Activated CD8-positive, alpha-beta T cell treated with anti-CD3 and anti-CD28 coated beads for 36 hours (primary cell): ENCODE measurements at regions of chr17 and their contacts with region 1.

Region 1: DNA sequence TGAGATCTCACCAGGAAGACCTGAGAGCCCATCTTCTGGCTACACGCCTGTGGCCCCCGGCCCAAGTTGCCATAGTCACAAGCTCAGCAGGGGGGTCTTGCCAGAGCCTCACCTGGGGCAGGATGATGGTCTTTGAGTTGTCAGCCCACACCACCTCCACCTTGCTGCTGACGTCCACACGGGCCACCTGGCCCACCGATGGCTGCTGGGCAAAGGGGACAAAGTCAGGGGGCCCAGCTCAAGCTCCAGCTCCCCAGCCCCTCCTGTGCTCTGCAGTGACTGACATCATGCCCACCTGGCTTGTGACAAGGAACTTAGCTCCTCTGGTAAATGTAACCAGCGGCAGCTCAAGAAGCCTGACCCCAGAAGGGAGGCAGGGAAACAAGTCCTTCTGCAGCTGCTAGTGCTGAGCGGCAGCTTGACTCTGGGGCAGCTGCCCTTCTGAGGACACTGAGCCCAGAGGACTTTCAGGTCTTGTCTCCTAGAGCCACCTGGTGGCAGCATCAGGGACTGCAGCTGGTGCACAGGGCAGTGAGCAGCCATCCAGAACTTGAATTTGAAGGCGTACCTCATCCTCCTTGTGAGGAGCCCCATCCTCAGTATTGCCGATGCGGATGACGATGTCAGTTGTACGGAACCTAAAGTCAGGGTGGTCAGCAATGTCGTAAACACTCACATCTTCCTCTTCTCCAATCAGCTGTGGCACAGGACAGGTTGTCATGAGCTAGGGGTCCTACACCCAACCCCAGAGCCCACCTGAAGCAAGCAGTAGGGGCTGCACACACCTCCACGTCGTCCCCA is 13.5 kb downstream of the SPHK1 start:
- DNase-seq: peak; percentile 93
- ATAC-seq: peak; percentile 97
- H3K4me3 Mint-ChIP-seq: no peak overlapping the region
- H3K27ac Mint-ChIP-seq: no peak overlapping the region
- H3K4me1 Mint-ChIP-seq: no peaks in the 10 kb centered on the region
- H3K27me3 Mint-ChIP-seq: no peaks in the 10 kb centered on the region
- CTCF ChIP-seq: peak; percentile 96

Region 2: DNA sequence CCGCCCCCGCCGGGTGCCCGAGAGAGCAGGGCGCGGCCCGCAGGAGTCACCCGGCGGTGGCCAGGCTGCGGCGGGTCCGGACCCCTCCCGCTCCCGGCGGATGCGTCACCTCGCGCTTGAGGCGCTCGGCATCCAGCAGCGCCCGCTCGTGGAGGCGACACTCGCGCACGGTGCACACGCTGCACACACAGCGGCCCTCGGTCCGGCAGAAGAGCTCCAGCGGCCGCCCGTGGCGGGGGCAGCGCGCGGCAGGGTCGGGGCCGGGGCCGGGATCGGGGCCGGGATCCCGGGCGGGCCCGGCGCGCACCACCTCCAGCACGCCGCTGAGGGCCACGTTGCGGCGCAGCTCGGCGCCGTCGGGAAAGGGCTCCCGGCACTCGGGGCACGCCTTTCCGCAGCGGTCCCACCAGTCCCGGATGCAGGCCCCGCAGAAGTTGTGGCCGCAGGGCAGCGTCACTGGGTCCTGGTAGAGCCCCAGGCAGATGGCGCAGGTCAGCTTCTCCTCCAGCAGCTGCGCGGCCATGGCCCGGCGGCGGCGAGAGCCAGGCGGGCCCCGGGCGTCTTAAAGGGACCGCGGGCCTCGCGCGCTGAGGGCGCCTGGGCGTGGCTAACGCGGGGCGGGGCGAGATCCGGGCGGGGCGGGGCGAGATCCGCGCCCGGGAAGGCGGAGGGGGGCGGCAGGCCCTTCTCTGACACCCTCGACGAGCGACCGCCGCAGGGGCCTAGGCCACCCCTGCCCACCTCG is 501.3 kb before region 1 on chr17 and contains the start of gene TRIM65:
- CTCF ChIA-PET with region 1: no interaction called
- POLR2A ChIA-PET with region 1: no interaction called
- intact Hi-C with region 1: no loop called
- DNase-seq: peak; percentile 85
- ATAC-seq: peak; percentile 88
- H3K4me3 Mint-ChIP-seq: peak within 1 kb of the TSS; percentile 87
- H3K27ac Mint-ChIP-seq: peak within 1 kb of the TSS; percentile 88
- H3K4me1 Mint-ChIP-seq: peaks cover 21% of the 10 kb centered on the region
- H3K27me3 Mint-ChIP-seq: no peaks in the 10 kb centered on the region
- CTCF ChIP-seq: peak; percentile 17
- total RNA-seq, gene TRIM65: 37.1 to 42.2 TPM

Region 3: GRCh38 chr17:76121932-76122430 is 275.9 kb before region 1 on chr17:
- CTCF ChIA-PET with region 1: interaction called, 14 read pairs
- POLR2A ChIA-PET with region 1: no interaction called
- intact Hi-C with region 1: no loop called
- DNase-seq: peak; percentile 40
- ATAC-seq: peak; percentile 10
- H3K4me3 Mint-ChIP-seq: peak overlapping the region; percentile 45
- H3K27ac Mint-ChIP-seq: peak overlapping the region; percentile 77
- H3K4me1 Mint-ChIP-seq: peaks cover 20% of the 10 kb centered on the region
- H3K27me3 Mint-ChIP-seq: no peaks in the 10 kb centered on the region
- CTCF ChIP-seq: no peak

Region 4: DNA sequence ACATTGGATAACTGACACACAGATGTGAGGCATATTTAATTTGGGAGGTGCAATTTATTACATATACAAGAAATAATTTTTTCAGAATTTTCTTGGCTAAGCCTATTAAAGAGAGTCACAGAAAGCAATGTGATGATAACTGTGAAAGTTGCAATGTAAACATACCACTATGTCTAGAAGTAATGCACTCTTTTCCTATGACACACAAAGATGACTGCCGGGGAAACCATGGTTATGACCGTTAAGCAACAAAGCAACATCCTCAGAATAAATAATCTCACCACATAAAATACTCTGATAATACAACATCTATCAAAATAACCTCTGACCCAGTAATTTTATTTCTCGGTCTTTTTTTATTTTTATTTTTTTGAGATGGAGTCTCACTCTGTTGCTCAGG is 79.3 kb before region 1 on chr17:
- CTCF ChIA-PET with region 1: interaction called, 11 read pairs
- POLR2A ChIA-PET with region 1: no interaction called
- intact Hi-C with region 1: no loop called
- DNase-seq: no peak
- ATAC-seq: no peak
- H3K4me3 Mint-ChIP-seq: no peak overlapping the region
- H3K27ac Mint-ChIP-seq: no peak overlapping the region
- H3K4me1 Mint-ChIP-seq: peaks cover 2% of the 10 kb centered on the region
- H3K27me3 Mint-ChIP-seq: no peaks in the 10 kb centered on the region
- CTCF ChIP-seq: no peak

Region 5: GRCh38 chr17:76353599-76354316 is 44.1 kb before region 1 on chr17 and contains the start of gene PRPSAP1:
- CTCF ChIA-PET with region 1: interaction called, 22 read pairs
- POLR2A ChIA-PET with region 1: no interaction called
- intact Hi-C with region 1: no loop called
- DNase-seq: peak; percentile 88
- ATAC-seq: peak; percentile 96
- H3K4me3 Mint-ChIP-seq: peak within 1 kb of the TSS; percentile 83
- H3K27ac Mint-ChIP-seq: peak within 1 kb of the TSS; percentile 98
- H3K4me1 Mint-ChIP-seq: peaks cover 16% of the 10 kb centered on the region
- H3K27me3 Mint-ChIP-seq: no peaks in the 10 kb centered on the region
- CTCF ChIP-seq: peak; percentile 37
- total RNA-seq, gene PRPSAP1: 28.1 to 29.9 TPM

Region 6: DNA sequence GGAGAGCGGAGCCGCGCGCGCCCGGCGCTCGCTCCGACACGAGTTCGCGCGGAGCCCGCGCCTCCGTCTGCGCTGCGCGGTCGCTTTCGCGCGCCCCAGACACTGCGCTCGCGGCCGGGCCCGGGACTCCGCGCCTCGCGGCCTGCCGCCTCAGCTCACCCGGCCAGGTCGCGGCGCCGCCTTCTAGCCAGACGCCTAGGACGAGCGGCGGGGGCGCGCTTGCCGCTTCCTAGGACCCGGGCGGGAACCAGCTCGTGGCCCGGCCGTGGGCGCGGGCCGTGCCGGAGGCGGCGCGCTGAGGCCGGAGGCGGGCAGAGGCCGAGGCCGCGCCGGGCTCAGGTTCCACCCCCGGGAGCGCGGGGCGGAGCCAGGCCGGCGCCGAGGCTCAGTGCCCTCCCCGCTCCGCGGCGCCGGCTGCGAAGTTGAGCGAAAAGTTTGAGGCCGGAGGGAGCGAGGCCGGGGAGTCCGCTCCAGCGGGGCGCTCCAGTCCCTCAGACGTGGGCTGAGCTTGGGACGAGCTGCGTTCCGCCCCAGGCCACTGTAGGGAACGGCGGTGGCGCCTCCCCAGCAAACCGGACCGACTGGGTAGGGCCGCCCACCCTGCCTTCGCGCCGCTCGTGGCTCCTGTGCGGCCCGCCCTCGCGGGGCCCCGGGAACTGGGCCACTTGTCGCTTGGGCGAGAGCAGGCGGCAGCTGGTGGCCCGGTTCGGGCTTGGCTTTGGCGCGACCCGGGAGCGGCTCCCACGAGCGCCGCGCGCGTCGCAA is 13.5 kb before region 1 on chr17 and contains the start of gene SPHK1:
- CTCF ChIA-PET with region 1: interaction called, 135 read pairs
- POLR2A ChIA-PET with region 1: interaction called, 6 read pairs
- intact Hi-C with region 1: no loop called
- DNase-seq: peak; percentile 77
- ATAC-seq: peak; percentile 72
- H3K4me3 Mint-ChIP-seq: peak within 1 kb of the TSS; percentile 77
- H3K27ac Mint-ChIP-seq: peak within 1 kb of the TSS; percentile 93
- H3K4me1 Mint-ChIP-seq: peaks cover 3% of the 10 kb centered on the region
- H3K27me3 Mint-ChIP-seq: no peaks in the 10 kb centered on the region
- CTCF ChIP-seq: peak; percentile 15
- total RNA-seq, gene SPHK1: 15.7 to 17.7 TPM

Region 7: DNA sequence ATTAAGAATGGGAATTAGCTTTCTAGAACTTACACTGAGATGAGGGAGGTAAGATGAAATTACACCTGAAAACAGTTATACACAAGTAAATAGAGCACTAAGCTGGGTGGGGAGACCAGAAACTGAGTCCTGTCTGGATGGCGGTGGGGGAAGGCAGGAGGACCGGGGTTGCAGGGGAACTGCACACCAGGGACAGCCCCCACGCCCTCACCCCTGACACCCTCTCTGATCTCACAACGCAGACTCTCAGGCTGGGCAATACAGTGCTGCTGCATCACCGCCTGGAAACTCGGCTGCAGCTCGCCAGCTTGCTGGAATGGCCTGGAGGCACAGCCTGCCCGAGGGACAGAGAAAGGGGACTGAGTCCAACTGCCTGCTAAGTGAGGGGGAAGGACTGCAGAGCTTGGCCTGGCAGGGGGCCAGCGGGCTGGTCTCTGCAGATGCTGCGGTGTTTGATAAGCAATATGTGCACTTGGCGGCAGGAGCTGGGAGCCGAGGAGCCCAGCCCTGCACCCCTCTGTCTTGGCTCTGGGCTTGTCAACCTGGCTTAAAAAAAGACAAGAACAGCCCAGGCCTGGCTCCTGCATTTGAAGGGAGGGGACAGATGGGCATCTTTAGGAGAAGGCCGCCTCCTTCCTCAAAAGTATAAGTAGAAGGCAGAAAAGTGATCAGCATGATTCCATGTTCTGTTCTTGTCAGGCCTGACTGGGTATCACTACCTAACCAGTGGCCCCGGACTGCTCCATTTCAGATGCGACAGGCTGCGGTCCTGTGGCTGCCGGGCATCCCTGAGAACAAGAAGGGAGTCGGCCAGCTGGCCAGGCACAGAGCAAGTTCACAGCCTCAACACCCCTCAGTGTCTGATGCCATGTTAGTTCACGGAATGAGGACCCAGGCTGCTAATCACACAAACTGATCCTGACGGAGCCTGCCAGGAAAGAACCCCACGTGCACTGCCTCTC is 16.7 kb after region 1 on chr17:
- CTCF ChIA-PET with region 1: interaction called, 26 read pairs
- POLR2A ChIA-PET with region 1: no interaction called
- intact Hi-C with region 1: no loop called
- DNase-seq: no peak
- ATAC-seq: no peak
- H3K4me3 Mint-ChIP-seq: no peak overlapping the region
- H3K27ac Mint-ChIP-seq: no peak overlapping the region
- H3K4me1 Mint-ChIP-seq: peaks cover 9% of the 10 kb centered on the region
- H3K27me3 Mint-ChIP-seq: no peaks in the 10 kb centered on the region
- CTCF ChIP-seq: no peak

Region 8: DNA sequence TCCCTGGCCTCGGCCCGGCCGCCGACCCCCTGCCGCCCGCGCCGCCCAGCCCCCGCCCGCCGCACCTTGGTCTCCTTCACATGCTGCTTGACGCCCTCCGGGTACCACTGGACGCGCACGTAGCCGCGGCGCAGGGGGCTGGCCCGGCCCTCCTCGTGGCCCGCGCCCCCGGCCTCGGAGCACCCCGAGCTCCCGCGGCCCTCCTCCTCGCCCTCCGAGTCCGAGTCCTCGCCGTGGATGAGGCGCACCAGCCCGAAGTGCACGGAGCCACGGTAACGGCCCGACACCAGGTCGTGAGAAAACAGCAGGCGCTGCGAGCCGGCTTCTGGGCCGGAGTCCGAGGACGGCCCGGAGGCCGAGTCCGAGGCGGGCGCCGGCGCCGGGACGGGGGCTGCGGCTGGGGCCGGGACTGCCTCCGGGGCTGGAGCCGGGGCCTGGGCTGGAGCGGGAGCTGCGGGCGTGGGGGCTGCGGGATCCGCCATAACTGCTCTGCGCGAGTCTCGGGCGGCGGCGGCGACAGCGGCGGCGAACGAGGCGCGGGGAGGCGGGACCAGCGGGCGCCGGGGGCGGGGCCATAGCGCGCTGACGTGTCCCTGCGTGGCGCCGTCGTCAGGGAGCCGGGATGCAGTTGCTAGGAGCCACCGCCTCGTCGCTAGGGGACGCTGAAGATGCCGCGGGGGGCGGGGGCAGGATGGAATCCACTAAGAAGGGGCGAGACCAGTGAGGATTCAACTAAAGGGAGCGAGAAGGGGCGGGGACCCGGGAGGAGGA is 55.0 kb after region 1 on chr17 and contains the start of gene UBE2O:
- CTCF ChIA-PET with region 1: interaction called, 13 read pairs
- POLR2A ChIA-PET with region 1: no interaction called
- intact Hi-C with region 1: no loop called
- DNase-seq: peak; percentile 93
- ATAC-seq: peak; percentile 97
- H3K4me3 Mint-ChIP-seq: peak within 1 kb of the TSS; percentile 90
- H3K27ac Mint-ChIP-seq: peak within 1 kb of the TSS; percentile 55
- H3K4me1 Mint-ChIP-seq: peaks cover 37% of the 10 kb centered on the region
- H3K27me3 Mint-ChIP-seq: no peaks in the 10 kb centered on the region
- CTCF ChIP-seq: peak; percentile 42
- total RNA-seq, gene UBE2O: 36.8 to 39.5 TPM